PC-3 (cell line): ENCODE measurements at regions of chr1 and their contacts with region 1.

Region 1: GRCh38 chr1:173062156-173062938 is 11.6 kb upstream of the TNFSF18 start:
- DNase-seq: peak; percentile 100
- ATAC-seq: peak; percentile 100
- H3K4me3 ChIP-seq: no peak overlapping the region
- H3K27ac ChIP-seq: peak overlapping the region; percentile 43
- H3K4me1 ChIP-seq: peaks cover 36% of the 10 kb centered on the region
- H3K27me3 ChIP-seq: no peaks in the 10 kb centered on the region
- CTCF ChIP-seq: no peak

Region 2: DNA sequence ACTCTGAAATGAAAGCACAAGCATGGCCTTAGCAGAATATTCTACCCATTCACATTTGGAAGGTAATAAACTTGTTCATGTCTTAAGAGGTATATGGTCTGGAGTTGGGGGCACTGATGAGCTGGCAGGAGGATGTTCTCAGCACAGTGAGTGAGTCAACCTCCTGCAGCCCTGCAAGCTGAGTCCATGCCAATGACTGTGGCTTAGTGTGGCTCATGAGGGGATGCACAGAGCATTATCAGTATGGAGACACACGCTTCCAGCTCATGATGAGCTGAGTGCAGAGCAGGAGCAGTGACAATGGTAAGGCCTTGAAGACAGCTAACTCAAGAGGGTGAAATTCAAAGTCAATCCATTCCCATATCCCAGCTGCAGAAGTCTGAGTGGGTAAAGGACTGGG is 113.9 kb before region 1 on chr1:
- CTCF ChIA-PET with region 1: no interaction called
- POLR2A ChIA-PET with region 1: no interaction called
- intact Hi-C with region 1: no loop called
- DNase-seq: peak; percentile 99
- ATAC-seq: peak; percentile 100
- H3K4me3 ChIP-seq: no peak overlapping the region
- H3K27ac ChIP-seq: peak overlapping the region; percentile 13
- H3K4me1 ChIP-seq: peaks cover 22% of the 10 kb centered on the region
- H3K27me3 ChIP-seq: no peaks in the 10 kb centered on the region
- CTCF ChIP-seq: peak; percentile 43

Region 3: GRCh38 chr1:172997941-172998361 is 64.4 kb before region 1 on chr1:
- CTCF ChIA-PET with region 1: no interaction called
- POLR2A ChIA-PET with region 1: no interaction called
- intact Hi-C with region 1: no loop called
- DNase-seq: peak; percentile 78
- ATAC-seq: peak; percentile 93
- H3K4me3 ChIP-seq: no peak overlapping the region
- H3K27ac ChIP-seq: peak overlapping the region; percentile 11; the same call in 1 of the 2 replicates
- H3K4me1 ChIP-seq: 0 out of 2 replicates have a peak, but pooled peaks cover 4% of the 10 kb centered on the region
- H3K27me3 ChIP-seq: no peaks in the 10 kb centered on the region
- CTCF ChIP-seq: no peak

Region 4: DNA sequence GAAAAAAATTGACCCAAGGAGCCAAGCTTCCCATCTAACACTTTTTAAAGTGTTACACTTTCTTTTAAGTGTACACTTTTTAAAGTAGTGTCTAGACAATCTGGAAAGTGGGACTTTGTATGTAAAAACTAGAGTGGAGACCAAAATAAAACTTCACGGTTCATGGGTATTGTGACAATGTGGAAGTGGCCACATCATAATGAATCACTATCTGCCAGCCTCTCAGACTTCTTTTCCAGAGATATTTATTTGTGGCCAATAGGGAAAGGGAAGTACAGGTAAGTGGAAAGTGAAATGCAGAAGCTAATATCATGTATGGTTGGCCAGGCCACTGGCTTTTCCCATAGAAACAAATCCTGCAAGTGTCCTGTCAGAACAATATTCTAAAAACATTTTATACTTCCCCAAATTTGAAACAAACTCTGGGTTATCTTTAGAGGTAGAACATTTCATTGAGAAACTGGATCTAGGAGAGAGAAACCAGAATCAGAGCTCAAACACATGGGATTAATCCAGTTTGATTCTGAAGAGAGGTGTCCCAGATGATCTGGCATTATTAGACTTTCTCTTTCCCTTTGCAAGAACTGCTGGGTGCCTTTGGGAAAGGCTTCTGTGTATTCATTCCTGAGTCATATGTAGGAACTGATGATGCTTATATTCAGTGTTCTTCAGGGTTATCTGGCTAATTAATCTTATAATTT is 13.6 kb before region 1 on chr1:
- CTCF ChIA-PET with region 1: no interaction called
- POLR2A ChIA-PET with region 1: no interaction called
- intact Hi-C with region 1: loop called (anchors 1 kb)
- DNase-seq: peak; percentile 98
- ATAC-seq: peak; percentile 85
- H3K4me3 ChIP-seq: no peak overlapping the region
- H3K27ac ChIP-seq: peak overlapping the region; percentile 51
- H3K4me1 ChIP-seq: peaks cover 55% of the 10 kb centered on the region
- H3K27me3 ChIP-seq: no peaks in the 10 kb centered on the region
- CTCF ChIP-seq: no peak

Region 5: GRCh38 chr1:173095632-173096031 is 33.3 kb after region 1 on chr1:
- CTCF ChIA-PET with region 1: no interaction called
- POLR2A ChIA-PET with region 1: no interaction called
- intact Hi-C with region 1: loop called (anchors 5 kb)
- DNase-seq: peak; percentile 98
- ATAC-seq: peak; percentile 97
- H3K4me3 ChIP-seq: no peak overlapping the region
- H3K27ac ChIP-seq: no peak overlapping the region
- H3K4me1 ChIP-seq: peaks cover 23% of the 10 kb centered on the region
- H3K27me3 ChIP-seq: no peaks in the 10 kb centered on the region
- CTCF ChIP-seq: no peak